PC-3 (cell line): ENCODE measurements at regions of chr14 and their contacts with region 1.

Region 1: DNA sequence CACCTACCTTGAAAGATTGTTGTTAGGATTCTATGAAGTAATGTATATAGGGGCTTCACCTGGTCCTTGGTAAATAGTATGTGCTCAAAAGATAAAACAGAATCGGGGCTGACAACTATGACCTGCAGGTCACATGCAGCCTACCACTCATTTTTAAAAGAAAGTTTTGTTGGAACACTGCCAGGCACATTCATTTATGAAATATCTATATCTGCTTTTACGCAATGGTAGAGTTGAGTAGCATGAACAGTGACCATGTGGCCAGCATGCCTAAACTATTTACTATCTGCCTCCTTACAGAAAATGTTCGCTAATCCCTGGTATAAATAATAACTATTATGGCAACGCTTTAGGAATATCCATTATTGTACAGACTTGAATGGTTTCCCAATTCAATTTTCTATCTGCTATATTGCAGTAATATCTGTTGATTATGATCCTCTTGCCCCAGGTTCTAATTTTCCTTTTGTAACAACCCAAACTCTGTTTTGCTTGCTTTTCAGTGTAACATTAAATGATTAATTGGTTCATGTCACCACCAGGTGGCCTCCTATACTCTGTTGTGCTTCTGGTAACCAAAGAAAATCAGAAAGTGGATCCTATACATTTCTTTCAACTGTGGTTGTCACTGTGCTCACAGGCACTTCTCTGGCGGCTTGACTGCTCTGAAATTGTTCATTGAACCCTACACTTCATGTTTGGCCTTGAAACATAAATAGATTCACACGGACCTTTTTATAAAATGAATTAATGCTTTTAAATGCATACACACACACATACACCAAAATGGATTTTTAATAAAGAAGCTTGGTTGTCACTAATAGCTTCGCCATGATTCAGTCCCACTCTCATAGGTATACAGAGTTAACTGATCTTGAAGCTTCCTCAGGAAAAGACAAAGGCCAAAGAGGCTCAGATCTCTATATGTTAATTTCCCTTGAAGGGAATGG is 227.7 kb upstream of the NPAS3 start:
- DNase-seq: peak; percentile 73
- ATAC-seq: peak; percentile 87
- H3K4me3 ChIP-seq: no peak overlapping the region
- H3K27ac ChIP-seq: no peak overlapping the region
- H3K4me1 ChIP-seq: peaks cover 16% of the 10 kb centered on the region
- H3K27me3 ChIP-seq: no peaks in the 10 kb centered on the region
- CTCF ChIP-seq: peak; percentile 89

Region 2: DNA sequence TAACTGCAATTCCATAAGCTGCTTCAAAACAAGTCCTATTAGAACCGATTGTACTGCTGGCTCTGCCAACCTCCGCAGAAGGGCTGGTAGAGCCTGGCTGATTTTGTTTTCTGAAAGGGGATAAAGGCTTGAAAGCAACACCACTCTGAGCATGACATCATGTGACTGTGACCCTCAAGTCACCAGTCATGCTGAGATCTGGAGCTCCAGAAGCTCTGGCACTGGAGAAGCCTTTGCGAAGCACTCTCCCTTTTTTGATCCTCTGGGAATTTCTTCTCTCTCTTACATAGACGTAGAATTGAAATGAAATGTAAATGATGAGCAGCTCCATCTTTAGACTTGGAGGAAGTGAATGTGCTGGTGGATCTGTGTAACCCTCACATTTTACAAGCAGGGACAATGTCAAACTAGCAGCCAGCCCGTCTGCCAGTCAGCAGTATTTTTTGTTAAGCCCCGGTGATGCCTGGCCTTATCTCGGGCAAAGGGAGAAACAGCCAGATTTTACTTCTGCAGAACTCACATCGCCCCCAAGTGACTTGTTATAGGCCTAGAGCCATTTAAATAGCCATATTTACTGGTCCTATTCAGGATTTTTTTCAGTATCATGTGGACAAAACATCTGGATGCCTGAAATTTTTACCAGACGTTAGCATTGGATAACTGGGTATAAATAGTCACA is 115.5 kb after region 1 on chr14:
- CTCF ChIA-PET with region 1: no interaction called
- POLR2A ChIA-PET with region 1: no interaction called
- intact Hi-C with region 1: loop called (anchors 5 kb)
- DNase-seq: peak; percentile 30
- ATAC-seq: no peak
- H3K4me3 ChIP-seq: no peak overlapping the region
- H3K27ac ChIP-seq: no peak overlapping the region
- H3K4me1 ChIP-seq: peaks cover 30% of the 10 kb centered on the region
- H3K27me3 ChIP-seq: no peaks in the 10 kb centered on the region
- CTCF ChIP-seq: peak; percentile 28; the same call in 1 of the 2 replicates

Region 3: GRCh38 chr14:32934073-32934890 is 223.3 kb after region 1 on chr14:
- CTCF ChIA-PET with region 1: no interaction called
- POLR2A ChIA-PET with region 1: no interaction called
- intact Hi-C with region 1: loop called (anchors 5 kb)
- DNase-seq: peak; percentile 20
- ATAC-seq: peak; percentile 37
- H3K4me3 ChIP-seq: peak overlapping the region; percentile 73
- H3K27ac ChIP-seq: no peak overlapping the region
- H3K4me1 ChIP-seq: 0 out of 2 replicates have a peak, but pooled peaks cover 4% of the 10 kb centered on the region
- H3K27me3 ChIP-seq: peaks cover 50% of the 10 kb centered on the region
- CTCF ChIP-seq: no peak

Region 4: GRCh38 chr14:33206981-33207380 is 496.0 kb after region 1 on chr14:
- CTCF ChIA-PET with region 1: no interaction called
- POLR2A ChIA-PET with region 1: no interaction called
- intact Hi-C with region 1: loop called (anchors 10 kb)
- DNase-seq: no peak
- ATAC-seq: no peak
- H3K4me3 ChIP-seq: no peak overlapping the region
- H3K27ac ChIP-seq: no peak overlapping the region
- H3K4me1 ChIP-seq: no peaks in the 10 kb centered on the region
- H3K27me3 ChIP-seq: peaks cover 17% of the 10 kb centered on the region
- CTCF ChIP-seq: no peak

Region 5: DNA sequence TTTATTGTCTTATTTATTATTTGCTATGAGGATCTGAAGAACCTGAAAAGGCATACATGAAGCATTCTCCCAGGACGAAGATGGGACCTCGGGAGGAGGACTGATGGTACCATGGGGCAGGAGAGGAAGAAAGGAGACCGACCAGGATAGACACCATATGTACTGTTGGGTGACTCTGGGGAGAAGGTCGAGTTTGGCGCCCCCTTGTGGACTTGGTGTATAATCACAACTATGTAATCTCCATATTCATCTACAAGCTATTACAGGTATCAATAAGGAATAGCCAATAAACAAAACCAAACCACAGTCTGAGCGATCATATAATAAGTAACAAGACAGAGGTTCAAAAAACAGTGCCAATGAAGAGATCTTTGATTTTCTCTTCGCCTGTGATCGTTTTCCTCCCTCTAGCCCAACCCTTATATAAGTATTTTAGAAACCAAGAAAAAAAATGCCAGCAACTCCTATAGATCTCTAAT is 1612.0 kb after region 1 on chr14:
- CTCF ChIA-PET with region 1: interaction called, 10 read pairs
- POLR2A ChIA-PET with region 1: no interaction called
- intact Hi-C with region 1: no loop called
- DNase-seq: peak; percentile 68
- ATAC-seq: peak; percentile 73
- H3K4me3 ChIP-seq: no peak overlapping the region
- H3K27ac ChIP-seq: no peak overlapping the region
- H3K4me1 ChIP-seq: peaks cover 5% of the 10 kb centered on the region; the same call in 1 of the 2 replicates
- H3K27me3 ChIP-seq: peaks cover 11% of the 10 kb centered on the region; the same call in 1 of the 2 replicates
- CTCF ChIP-seq: peak; percentile 92